Natural killer cell (primary cell): ENCODE measurements at regions of chr7 and their contacts with region 1.

Region 1: DNA sequence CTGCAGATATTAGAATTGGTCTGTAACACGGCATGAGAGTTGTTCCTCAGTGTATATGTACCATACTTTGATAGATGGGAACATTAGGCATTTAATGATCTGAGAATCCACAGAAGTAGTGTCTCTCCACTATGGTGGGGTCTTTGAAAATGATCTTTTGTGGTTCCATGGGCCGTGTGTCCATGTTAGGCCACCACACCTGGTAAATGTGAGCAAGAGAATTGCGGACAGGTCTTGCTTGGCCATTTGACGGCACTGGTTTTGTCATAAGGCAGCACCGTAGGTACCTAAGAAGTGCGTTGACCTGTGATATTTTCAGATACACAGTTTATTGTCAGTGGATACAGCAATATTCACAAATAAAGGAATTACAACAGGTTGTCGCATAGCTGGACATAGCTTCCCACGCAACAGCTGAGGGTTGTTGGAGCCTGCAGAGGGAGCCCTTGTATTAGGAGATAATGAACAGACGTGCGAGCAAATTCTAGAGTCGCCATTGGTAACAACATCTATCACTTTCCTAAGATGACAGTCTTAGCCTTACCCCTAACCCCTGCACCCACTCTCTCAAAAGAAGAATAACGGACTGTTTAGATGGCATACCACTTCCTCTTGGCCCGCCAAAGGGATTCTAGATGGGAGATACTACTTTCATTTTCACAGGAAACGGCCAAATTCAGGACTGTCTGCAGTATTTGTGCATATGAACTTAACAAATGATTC is 111.4 kb downstream of the COL28A1 start:
- DNase-seq: peak; percentile 16 to 66
- ATAC-seq: peak; percentile 67 to 84 (median 74)
- H3K4me3 ChIP-seq: peak overlapping the region; percentile 46
- H3K4me3 Mint-ChIP-seq: peak overlapping the region; percentile 82
- H3K27ac ChIP-seq: peak overlapping the region; percentile 13
- H3K27ac Mint-ChIP-seq: peak overlapping the region in 1 of 2 donors; percentile 73
- H3K4me1 ChIP-seq: peaks cover 5% of the 10 kb centered on the region
- H3K4me1 Mint-ChIP-seq: peaks cover 0 to 7% of the 10 kb centered on the region in 2 donors
- H3K27me3 ChIP-seq: no peaks in the 10 kb centered on the region
- H3K27me3 Mint-ChIP-seq: peaks cover 0 to 2% of the 10 kb centered on the region in 2 donors
- CTCF ChIP-seq: peak; percentile 55

Region 2: GRCh38 chr7:7103343-7104313 is 320.7 kb before region 1 on chr7:
- intact Hi-C with region 1: loop called (anchors 10 kb)
- DNase-seq: peak in 1 of 2 donors; percentile 83
- ATAC-seq: peak; percentile 55 to 78 (median 71)
- H3K4me3 ChIP-seq: no peak overlapping the region
- H3K4me3 Mint-ChIP-seq: no peak overlapping the region
- H3K27ac ChIP-seq: no peak overlapping the region
- H3K27ac Mint-ChIP-seq: no peak overlapping the region
- H3K4me1 ChIP-seq: no peaks in the 10 kb centered on the region
- H3K4me1 Mint-ChIP-seq: no peaks in the 10 kb centered on the region
- H3K27me3 ChIP-seq: no peaks in the 10 kb centered on the region
- H3K27me3 Mint-ChIP-seq: peaks cover 0 to 3% of the 10 kb centered on the region in 2 donors
- CTCF ChIP-seq: peak; percentile 71

Region 3: GRCh38 chr7:7521259-7521658 is 96.9 kb after region 1 on chr7:
- intact Hi-C with region 1: loop called (anchors 10 kb)
- DNase-seq: no peak
- ATAC-seq: peak in 1 of 3 donors; percentile 61
- H3K4me3 ChIP-seq: no peak overlapping the region
- H3K4me3 Mint-ChIP-seq: no peak overlapping the region
- H3K27ac ChIP-seq: no peak overlapping the region
- H3K27ac Mint-ChIP-seq: no peak overlapping the region
- H3K4me1 ChIP-seq: no peaks in the 10 kb centered on the region
- H3K4me1 Mint-ChIP-seq: peaks cover 0 to 7% of the 10 kb centered on the region in 2 donors
- H3K27me3 ChIP-seq: no peaks in the 10 kb centered on the region
- H3K27me3 Mint-ChIP-seq: peaks cover 0 to 8% of the 10 kb centered on the region in 2 donors
- CTCF ChIP-seq: no peak

Region 4: DNA sequence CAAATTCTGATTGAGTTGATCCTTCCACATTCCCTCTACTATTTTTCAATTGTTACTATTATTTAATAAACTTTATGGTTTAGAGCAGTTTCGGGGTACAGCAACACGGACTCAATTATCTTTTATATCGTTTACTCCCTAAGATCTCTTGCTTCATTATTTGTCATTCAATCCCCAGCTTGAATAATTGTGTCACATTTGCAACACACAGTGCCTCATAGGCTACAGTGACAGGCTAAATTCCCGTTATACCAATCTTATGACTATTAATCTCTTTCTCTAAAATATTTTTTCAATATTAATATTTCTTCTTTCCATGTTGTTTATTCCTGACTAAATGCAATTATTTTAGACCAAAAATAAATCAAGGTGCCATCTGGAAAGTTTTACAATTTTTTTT is 115.4 kb after region 1 on chr7:
- intact Hi-C with region 1: loop called (anchors 2 kb)
- DNase-seq: no peak
- ATAC-seq: no peak
- H3K4me3 ChIP-seq: no peak overlapping the region
- H3K4me3 Mint-ChIP-seq: no peak overlapping the region
- H3K27ac ChIP-seq: no peak overlapping the region
- H3K27ac Mint-ChIP-seq: no peak overlapping the region
- H3K4me1 ChIP-seq: no peaks in the 10 kb centered on the region
- H3K4me1 Mint-ChIP-seq: peaks cover 5 to 6% of the 10 kb centered on the region in 2 donors
- H3K27me3 ChIP-seq: no peaks in the 10 kb centered on the region
- H3K27me3 Mint-ChIP-seq: peaks cover 0 to 14% of the 10 kb centered on the region in 2 donors
- CTCF ChIP-seq: no peak

Region 5: GRCh38 chr7:7739204-7740036 is 315.1 kb after region 1 on chr7:
- intact Hi-C with region 1: no loop called
- DNase-seq: no peak
- ATAC-seq: no peak
- H3K4me3 ChIP-seq: no peak overlapping the region
- H3K4me3 Mint-ChIP-seq: no peak overlapping the region
- H3K27ac ChIP-seq: no peak overlapping the region
- H3K27ac Mint-ChIP-seq: peak overlapping the region in 1 of 2 donors; percentile 9
- H3K4me1 ChIP-seq: peaks cover 4% of the 10 kb centered on the region
- H3K4me1 Mint-ChIP-seq: peaks cover 9 to 13% of the 10 kb centered on the region in 2 donors
- H3K27me3 ChIP-seq: no peaks in the 10 kb centered on the region
- H3K27me3 Mint-ChIP-seq: no peaks in the 10 kb centered on the region
- CTCF ChIP-seq: no peak

Region 6: GRCh38 chr7:8217200-8218068 is 793.1 kb after region 1 on chr7:
- intact Hi-C with region 1: loop called (anchors 1 kb)
- DNase-seq: peak in 1 of 2 donors; percentile 86
- ATAC-seq: peak; percentile 75 to 79 (median 77)
- H3K4me3 ChIP-seq: no peak overlapping the region
- H3K4me3 Mint-ChIP-seq: no peak overlapping the region
- H3K27ac ChIP-seq: no peak overlapping the region
- H3K27ac Mint-ChIP-seq: no peak overlapping the region
- H3K4me1 ChIP-seq: no peaks in the 10 kb centered on the region
- H3K4me1 Mint-ChIP-seq: peaks cover 5 to 6% of the 10 kb centered on the region in 2 donors
- H3K27me3 ChIP-seq: no peaks in the 10 kb centered on the region
- H3K27me3 Mint-ChIP-seq: peaks cover 0 to 4% of the 10 kb centered on the region in 2 donors
- CTCF ChIP-seq: peak; percentile 81